Heart right ventricle (tissue), 16 donors: ENCODE measurements at regions of chr3 and their contacts with region 1.

Region 1: GRCh38 chr3:26369119-26369518 is 253.5 kb upstream of the LRRC3B start:
- DNase-seq: no peak
- ATAC-seq: no peak
- H3K4me3 ChIP-seq: no peak overlapping the region
- H3K27ac ChIP-seq: no peak overlapping the region
- H3K4me1 ChIP-seq: no peaks in the 10 kb centered on the region
- H3K27me3 ChIP-seq: no peaks in the 10 kb centered on the region
- CTCF ChIP-seq: no peak

Region 2: DNA sequence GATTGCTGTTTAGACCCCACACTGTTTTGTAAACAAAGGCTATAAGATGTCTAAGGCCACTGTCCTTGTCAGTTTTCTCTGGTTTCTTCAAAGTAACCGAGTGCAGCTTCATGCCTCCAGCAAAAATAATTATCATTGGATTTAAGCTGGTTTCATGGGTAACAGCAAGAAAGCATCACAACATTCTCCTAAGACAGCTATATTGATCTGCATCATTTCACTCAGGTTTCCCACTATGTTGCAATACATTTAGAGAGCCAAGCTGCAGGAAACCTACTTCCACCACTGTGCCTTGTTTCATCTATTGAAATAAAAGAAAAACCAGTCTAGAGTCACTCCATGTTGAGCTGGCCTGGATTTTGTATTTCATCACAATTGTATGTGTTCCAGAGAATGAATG is 227.8 kb before region 1 on chr3:
- intact Hi-C with region 1: loop called in 1 of 10 experiments (anchors 10 kb)
- DNase-seq: no peak
- ATAC-seq: no peak
- H3K4me3 ChIP-seq: no peak overlapping the region
- H3K27ac ChIP-seq: no peak overlapping the region
- H3K4me1 ChIP-seq: no peaks in the 10 kb centered on the region
- H3K27me3 ChIP-seq: no peaks in the 10 kb centered on the region
- CTCF ChIP-seq: no peak

Region 3: GRCh38 chr3:26247712-26248111 is 121.4 kb before region 1 on chr3:
- intact Hi-C with region 1: no loop called
- DNase-seq: no peak
- ATAC-seq: no peak
- H3K4me3 ChIP-seq: no peak overlapping the region
- H3K27ac ChIP-seq: no peak overlapping the region
- H3K4me1 ChIP-seq: peaks cover 0 to 10% (median 0%) of the 10 kb centered on the region in 9 donors
- H3K27me3 ChIP-seq: no peaks in the 10 kb centered on the region
- CTCF ChIP-seq: no peak

Region 4: DNA sequence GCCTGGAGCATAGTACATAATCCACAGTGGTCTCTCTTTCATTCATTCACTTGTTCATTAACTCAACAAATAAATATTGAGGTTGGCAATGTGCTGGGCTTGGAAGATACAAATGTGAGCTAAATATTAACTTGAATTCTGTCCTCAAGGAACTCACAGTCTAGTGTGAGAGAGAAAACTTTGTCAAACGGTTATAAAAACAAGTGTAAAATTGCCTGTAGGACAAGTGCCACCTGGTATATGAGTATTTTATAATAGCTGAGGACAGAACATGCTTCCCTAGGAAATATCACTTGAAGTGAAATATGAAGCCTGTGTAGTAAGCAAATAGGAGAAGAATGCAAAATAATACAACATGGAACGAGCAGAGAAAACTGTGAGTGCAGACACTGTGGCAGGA is 1699.2 kb after region 1 on chr3:
- intact Hi-C with region 1: no loop called
- DNase-seq: no peak
- ATAC-seq: no peak
- H3K4me3 ChIP-seq: no peak overlapping the region
- H3K27ac ChIP-seq: no peak overlapping the region
- H3K4me1 ChIP-seq: no peaks in the 10 kb centered on the region
- H3K27me3 ChIP-seq: no peaks in the 10 kb centered on the region
- CTCF ChIP-seq: no peak